ENCODE measurements at regions of chr15 and their contacts with region 1.

Region 1: GRCh38 chr15:74799856-74800547 is 12.6 kb upstream of the LMAN1L start:
- DNase-seq: peak; percentile 76
- ATAC-seq: peak; percentile 94
- H3K4me3 ChIP-seq: no peak overlapping the region
- H3K27ac ChIP-seq: peak overlapping the region; percentile 39
- H3K4me1 ChIP-seq: peaks cover 38% of the 10 kb centered on the region
- H3K27me3 ChIP-seq: no peaks in the 10 kb centered on the region
- CTCF ChIP-seq: peak; percentile 97 to 99 (median 99); a peak in 5 of 6 replicates
- EP300 ChIP-seq: 0 out of 4 replicates have a peak, but pooled peaks of 1 of the 2 experiments have one; percentile 60
- POLR2A ChIP-seq: peak; percentile 69
- RAD21 ChIP-seq: peak; percentile 93

Region 2: DNA sequence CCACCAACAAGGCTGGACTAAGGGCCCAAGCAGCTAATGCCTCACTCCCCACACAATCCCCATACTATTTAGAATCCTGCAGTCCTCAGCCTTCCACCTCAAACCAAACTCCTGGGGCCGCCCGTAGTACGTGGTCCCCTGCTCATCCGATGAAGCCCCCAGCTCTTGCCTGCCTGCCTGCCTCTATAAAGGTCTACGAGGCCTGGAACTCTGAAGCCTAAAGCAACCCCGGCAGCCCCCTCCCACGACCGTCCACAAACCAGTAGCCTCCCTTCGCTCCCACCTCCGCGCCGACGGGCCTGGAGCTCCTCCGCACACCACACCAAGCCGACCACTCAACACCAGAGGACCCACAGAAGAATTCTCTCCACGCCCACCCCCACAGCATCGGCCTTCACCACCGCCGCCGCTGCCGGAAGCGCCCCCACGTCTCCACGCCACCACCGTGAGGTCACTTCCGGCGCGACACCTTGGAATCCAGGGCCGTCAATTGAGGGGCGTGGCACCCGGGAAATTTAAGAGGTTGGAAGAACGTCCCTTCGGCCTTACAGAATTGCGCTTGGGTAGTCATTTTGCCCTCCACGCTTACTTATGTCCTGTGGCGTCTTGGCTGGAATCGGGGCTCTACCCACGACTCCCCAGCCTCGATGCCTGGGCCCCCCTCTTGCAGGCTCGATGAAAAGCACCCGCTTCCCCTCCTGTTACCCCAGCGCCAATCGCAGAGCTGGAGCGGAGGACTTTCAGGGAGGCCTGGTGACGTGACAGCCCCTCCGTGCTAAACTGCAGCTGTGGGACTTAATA is 104.2 kb before region 1 on chr15 and contains the start of gene EDC3:
- CTCF ChIA-PET with region 1: no interaction called
- POLR2A ChIA-PET with region 1: no interaction called
- RAD21 ChIA-PET with region 1: no interaction called
- SMC1A ChIA-PET with region 1: no interaction called
- in situ Hi-C with region 1: no loop called
- intact Hi-C with region 1: no loop called
- DNase-seq: peak; percentile 40
- ATAC-seq: peak; percentile 95
- H3K4me3 ChIP-seq: peak within 1 kb of the TSS; percentile 83
- H3K27ac ChIP-seq: peak within 1 kb of the TSS; percentile 89
- H3K4me1 ChIP-seq: peaks cover 9% of the 10 kb centered on the region
- H3K27me3 ChIP-seq: no peaks in the 10 kb centered on the region
- CTCF ChIP-seq: no peak
- EP300 ChIP-seq: no peak
- POLR2A ChIP-seq: peak; percentile 85
- RAD21 ChIP-seq: no peak
- polyA plus RNA-seq, gene EDC3: 16.0 to 18.5 TPM

Region 3: DNA sequence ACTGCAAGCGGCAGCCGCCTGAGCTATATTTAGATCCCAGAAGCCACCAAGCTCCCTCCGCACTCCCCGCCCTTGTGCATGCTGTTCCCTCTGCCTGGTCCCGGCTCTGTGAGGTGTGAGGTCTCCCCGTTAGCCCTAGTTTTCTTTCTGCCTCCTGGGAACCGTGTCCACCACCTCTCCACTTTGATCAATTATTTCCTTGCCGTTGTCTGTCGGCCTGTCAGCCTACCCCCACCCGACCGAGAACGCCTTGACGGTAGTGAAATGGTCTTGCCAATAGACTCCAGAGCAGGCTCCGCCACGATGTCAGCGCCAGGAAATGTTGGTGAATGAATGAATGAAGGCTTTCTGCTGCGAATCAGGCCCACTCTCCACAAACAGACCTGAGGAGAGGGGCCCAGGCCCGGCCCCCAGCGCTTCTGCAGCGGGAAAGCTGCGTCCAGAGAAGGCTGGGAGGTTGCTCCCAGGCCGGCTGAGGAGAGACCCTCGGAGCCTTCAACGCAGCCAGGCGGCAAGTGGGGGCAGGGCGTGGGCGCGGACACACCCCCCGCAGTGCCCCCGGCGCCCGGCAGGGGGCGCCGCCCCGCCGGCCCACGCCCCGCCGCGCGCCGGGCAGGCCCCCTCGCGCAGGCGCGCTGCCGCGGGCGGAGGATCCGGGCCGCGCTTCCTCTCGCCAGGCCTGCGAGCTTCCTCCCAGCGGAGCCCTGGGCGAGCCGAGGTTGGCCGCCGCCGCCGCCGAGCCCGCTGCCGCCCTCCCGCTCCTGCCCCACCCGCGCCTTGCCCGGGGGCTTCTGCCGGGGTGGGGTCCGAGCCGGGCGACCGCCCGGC is 18.4 kb before region 1 on chr15 and contains the start of gene CSK:
- CTCF ChIA-PET with region 1: interaction called, 1,288 read pairs
- POLR2A ChIA-PET with region 1: interaction called, 602 read pairs
- RAD21 ChIA-PET with region 1: interaction called, 1,186 read pairs
- SMC1A ChIA-PET with region 1: interaction called, 811 read pairs
- in situ Hi-C with region 1: no loop called
- intact Hi-C with region 1: loop called (anchors 1 kb)
- DNase-seq: no peak
- ATAC-seq: no peak; the same call in 2 of the 3 replicates
- H3K4me3 ChIP-seq: peak within 1 kb of the TSS; percentile 94
- H3K27ac ChIP-seq: peak within 1 kb of the TSS; percentile 96
- H3K4me1 ChIP-seq: peaks cover 59% of the 10 kb centered on the region
- H3K27me3 ChIP-seq: no peaks in the 10 kb centered on the region
- CTCF ChIP-seq: peak; percentile 52 to 62 (median 62); a peak in 5 of 6 replicates
- EP300 ChIP-seq: peak in 1 of 2 experiments; percentile 6; a peak in 1 of 4 replicates
- POLR2A ChIP-seq: peak; percentile 78
- RAD21 ChIP-seq: peak; percentile 28; the same call in 1 of the 2 replicates
- polyA plus RNA-seq, gene CSK: 3.4 to 11.5 TPM

Region 4: GRCh38 chr15:74787251-74788041 is 12.6 kb before region 1 on chr15:
- CTCF ChIA-PET with region 1: interaction called, 1,288 read pairs
- POLR2A ChIA-PET with region 1: interaction called, 602 read pairs
- RAD21 ChIA-PET with region 1: interaction called, 1,186 read pairs
- SMC1A ChIA-PET with region 1: interaction called, 811 read pairs
- in situ Hi-C with region 1: no loop called
- intact Hi-C with region 1: loop called (anchors 1 kb)
- DNase-seq: peak; percentile 97
- ATAC-seq: peak; percentile 58
- H3K4me3 ChIP-seq: peak overlapping the region; percentile 94
- H3K27ac ChIP-seq: peak overlapping the region; percentile 96
- H3K4me1 ChIP-seq: peaks cover 55% of the 10 kb centered on the region
- H3K27me3 ChIP-seq: no peaks in the 10 kb centered on the region
- CTCF ChIP-seq: peak; percentile 79 to 93 (median 82)
- EP300 ChIP-seq: peak; percentile 83 to 88
- POLR2A ChIP-seq: peak; percentile 76
- RAD21 ChIP-seq: peak; percentile 45; the same call in 1 of the 2 replicates

Region 5: DNA sequence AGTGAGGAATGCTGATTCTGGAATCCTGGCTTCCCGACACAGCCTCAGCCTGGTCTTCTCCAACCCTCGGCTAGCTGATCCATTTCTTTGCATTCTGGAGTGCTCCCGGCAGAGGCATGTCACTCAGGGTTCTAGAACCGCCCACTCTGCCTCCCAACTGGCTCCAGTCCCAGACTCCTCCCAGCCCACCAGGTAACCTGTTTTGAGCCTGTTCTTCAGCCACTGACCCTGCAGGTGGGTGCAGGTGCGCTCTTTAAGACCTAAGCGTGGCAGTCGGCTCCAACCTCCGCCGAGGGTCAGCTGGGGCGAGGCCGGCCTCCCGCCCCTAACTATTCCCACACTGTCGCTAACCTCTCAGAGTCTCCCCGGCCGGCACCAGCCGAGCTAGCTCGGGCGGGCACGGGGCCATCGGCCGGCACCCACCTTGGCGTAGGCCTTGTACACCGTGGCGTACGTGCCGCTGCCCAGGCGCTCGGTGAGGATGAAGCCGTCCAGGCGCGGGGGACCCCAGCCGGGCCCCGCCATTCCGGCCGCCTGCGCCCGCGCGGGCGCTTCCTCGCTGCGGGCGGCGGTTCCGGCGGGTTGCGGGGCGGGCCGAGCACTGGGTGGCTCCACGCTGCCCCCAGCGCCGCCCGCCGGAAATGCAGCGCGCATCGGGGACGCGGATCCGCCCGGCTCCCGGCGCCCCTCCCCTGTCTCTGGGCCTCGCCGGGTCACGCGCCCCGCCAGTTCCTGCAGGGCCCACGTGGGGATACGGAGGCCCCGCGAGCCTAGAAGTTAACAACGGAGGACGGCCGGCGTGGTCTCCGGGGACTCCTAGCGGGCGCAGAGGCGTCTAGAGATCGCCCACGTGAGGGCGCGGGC is 42.8 kb after region 1 on chr15 and contains the start of gene ULK3:
- CTCF ChIA-PET with region 1: interaction called, 3 read pairs
- POLR2A ChIA-PET with region 1: no interaction called
- RAD21 ChIA-PET with region 1: no interaction called
- SMC1A ChIA-PET with region 1: no interaction called
- in situ Hi-C with region 1: no loop called
- intact Hi-C with region 1: loop called (anchors 5 kb)
- DNase-seq: no peak
- ATAC-seq: peak; percentile 95
- H3K4me3 ChIP-seq: peak within 1 kb of the TSS; percentile 86
- H3K27ac ChIP-seq: peak within 1 kb of the TSS; percentile 80
- H3K4me1 ChIP-seq: peaks cover 13% of the 10 kb centered on the region
- H3K27me3 ChIP-seq: no peaks in the 10 kb centered on the region
- CTCF ChIP-seq: peak; percentile 45 to 60 (median 50); a peak in 5 of 6 replicates
- EP300 ChIP-seq: no peak
- POLR2A ChIP-seq: peak; percentile 75
- RAD21 ChIP-seq: peak; percentile 26
- polyA plus RNA-seq, gene ULK3: 0.64 to 1.4 TPM